Activated B cell treated with CpG ODN at 0.5 μM for 24 hours (primary cell): ENCODE measurements at regions of chr13 and their contacts with region 1.

Region 1: DNA sequence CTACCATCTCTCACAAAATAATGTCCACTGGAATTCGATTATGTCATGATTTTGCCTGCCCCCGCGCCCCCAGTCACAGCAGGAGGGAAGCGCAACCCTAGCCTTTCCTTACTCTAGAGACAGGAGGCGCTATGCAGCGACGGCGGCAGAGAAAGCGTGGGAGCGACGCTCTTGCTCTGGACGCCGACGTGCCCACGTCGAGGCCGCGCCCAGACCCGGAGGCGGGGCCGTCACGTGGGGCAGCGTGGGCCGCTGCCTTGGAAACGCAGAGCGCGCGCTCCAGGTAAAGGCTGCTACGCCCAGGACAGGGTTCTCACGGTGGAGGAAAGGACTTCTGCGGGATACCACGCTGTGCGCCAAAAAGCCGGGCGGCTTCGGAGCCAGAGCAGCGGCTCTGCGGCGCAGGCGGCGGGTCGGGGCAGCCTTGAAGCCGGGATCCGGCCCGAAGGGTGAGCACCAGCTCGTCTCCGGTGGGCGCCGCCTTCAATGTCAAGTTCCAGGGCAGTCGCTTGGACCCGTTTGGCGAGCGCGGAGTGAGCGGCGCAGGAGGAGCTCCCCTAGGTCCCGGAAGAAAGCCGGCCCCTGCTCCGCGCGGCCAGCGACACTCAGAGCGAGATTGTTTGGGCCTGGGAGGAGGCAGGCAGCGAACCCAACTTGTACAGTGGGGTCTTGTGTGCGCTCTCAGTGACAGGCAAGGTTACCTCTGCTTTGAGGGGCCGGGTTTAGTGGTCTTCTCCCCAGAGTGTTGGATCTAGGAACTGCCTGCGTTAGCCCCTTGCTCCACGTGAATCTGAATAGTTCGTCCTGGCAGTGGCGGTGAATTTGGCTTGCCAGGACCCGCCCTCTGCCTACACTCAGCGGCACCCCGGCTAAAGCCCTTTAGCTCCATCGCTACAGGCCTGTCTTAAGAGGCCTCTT is 121.7 kb downstream of the MRPL57 start:
- DNase-seq: peak; percentile 84
- ATAC-seq: peak; percentile 97
- H3K4me3 Mint-ChIP-seq: peak overlapping the region; percentile 89
- H3K27ac Mint-ChIP-seq: peak overlapping the region; percentile 77
- H3K4me1 Mint-ChIP-seq: peaks cover 18% of the 10 kb centered on the region
- H3K27me3 Mint-ChIP-seq: no peaks in the 10 kb centered on the region
- CTCF ChIP-seq: no peak

Region 2: DNA sequence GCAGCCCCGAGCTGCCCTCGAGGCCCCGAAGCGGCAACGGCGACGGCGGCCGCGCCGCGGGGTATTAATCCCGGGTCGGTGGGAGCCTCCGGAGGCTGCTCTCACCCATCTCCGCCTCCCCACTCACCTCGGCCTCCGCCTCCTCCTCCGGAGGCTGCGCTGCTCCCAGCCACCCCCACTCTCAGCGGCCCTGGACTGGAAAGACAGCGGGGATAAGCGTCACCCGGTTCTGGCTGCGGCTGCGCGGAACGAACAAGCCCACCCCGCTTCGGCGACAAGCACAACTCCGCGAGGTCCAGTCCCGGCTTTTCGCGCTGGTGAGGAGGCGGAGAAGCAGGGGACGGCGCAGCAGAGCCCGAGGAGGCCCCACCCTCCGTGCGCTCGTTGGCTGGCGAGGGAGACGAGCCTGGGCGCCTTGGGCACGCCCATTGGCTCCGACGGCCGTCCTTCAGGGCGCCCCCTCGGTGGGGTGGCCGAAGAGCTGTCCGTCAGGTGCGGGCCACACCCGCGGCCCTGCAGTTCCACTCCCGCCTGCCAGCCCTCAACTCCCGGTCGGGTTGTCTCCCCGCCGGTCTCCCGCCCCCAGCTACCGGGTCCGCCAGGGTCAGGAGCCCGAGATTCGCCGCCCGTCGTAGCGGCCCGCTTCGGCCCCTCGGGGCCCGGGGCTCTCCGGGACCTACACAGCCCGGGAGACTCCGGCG is 1434.7 kb before region 1 on chr13 and contains the start of gene ZMYM5:
- CTCF ChIA-PET with region 1: no interaction called
- POLR2A ChIA-PET with region 1: no interaction called
- intact Hi-C with region 1: loop called (anchors 10 kb)
- DNase-seq: peak; percentile 93
- ATAC-seq: peak; percentile 88
- H3K4me3 Mint-ChIP-seq: peak within 1 kb of the TSS; percentile 89
- H3K27ac Mint-ChIP-seq: peak within 1 kb of the TSS; percentile 96
- H3K4me1 Mint-ChIP-seq: peaks cover 30% of the 10 kb centered on the region
- H3K27me3 Mint-ChIP-seq: no peaks in the 10 kb centered on the region
- CTCF ChIP-seq: no peak
- total RNA-seq, gene ZMYM5: 14.1 and 17.1 TPM in 2 replicates

Region 3: DNA sequence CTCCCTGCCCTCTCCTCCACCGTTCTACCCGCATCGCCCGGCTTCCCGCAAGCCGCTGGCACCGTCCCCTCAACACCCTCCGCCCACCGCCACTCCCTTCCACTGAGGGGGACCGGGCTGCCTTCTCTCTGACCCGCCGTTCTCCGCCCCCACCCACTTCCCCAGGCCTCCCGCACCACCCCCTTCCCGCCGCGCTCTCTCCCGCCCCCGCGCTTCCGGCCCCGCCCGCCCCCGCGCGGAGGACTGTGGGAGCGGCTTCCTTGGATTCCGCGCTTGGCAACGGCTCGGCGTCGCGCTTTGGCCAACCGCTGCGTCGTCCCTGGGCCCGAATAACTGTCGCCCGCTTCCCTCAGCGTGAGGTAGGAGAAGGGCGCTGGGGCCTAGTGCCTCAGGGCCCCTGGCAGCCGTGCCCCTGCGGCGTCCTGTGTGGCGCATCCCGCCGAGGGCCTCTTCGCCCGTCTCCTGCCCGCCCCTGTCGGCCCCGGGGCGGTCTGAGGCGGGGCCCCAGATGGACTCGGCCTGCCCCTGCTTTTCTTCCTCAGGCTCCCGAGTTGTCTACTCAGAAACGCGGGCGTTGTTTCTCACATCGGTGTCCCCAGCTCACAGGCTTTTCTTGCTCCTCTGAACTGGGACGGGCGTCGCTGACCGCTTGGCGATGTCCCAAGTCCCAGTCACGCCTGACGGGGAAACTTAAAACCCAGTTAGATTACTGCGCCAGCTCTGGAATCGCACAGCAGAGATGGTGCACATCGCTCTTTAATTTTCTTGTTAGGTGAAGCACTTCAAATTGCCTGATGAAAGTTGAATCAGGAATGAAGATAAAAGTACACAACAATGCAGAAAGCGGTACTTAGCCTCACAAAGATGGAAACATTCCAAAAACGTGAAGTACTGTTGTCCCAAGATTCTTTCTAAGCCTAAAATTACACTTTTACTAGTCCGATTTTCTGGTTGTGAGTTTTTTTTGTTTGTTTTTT is 731.0 kb before region 1 on chr13 and contains the start of gene IFT88:
- CTCF ChIA-PET with region 1: no interaction called
- POLR2A ChIA-PET with region 1: no interaction called
- intact Hi-C with region 1: loop called (anchors 5 kb)
- DNase-seq: peak; percentile 92
- ATAC-seq: peak; percentile 90
- H3K4me3 Mint-ChIP-seq: peak within 1 kb of the TSS; percentile 92
- H3K27ac Mint-ChIP-seq: peak within 1 kb of the TSS; percentile 89
- H3K4me1 Mint-ChIP-seq: peaks cover 18% of the 10 kb centered on the region
- H3K27me3 Mint-ChIP-seq: no peaks in the 10 kb centered on the region
- CTCF ChIP-seq: no peak
- total RNA-seq, gene IFT88: 16.4 and 17.3 TPM in 2 replicates

Region 4: DNA sequence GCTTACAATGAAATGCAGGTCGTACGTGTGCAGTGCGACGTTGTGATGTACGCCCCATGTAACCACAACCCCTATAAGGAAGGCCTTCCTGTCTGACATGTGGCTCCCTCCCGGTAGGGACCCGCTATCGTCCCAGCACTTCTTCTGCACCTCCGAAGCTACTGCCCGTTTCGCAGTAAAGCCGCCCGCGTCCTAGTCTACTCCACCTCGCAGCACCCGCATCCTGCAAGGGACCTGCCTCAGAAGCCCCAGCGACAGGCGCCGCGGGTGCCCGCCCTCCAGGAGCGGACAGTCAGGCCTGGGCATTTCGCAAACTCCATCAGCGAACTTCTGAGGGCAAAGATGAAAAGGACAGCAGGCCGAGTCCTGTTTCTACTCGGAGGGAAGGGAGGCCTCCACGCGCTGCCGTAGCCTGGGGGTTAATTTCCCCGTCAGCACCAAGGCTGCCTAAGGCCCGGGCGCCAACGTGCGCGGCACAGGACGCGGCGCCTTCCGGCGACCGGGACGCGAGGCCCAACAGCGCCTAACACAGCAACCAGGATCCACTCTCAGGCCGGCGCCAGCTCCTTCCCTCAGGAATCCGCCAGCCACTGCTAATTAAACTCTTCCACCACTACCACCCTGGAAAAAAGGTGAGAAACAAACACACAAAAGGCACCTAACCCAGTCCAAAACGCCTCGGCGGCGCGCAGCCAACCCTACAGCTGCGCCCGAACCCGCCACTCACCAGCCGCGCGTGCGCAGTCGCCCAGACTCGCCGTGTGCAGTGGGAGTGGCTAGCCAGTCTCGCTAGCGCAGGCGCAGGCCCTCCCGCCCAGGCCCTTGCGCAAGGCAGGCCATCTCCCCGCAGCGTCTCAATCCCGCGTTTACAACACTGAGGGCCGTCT is 524.7 kb before region 1 on chr13 and contains the start of gene EEF1AKMT1:
- CTCF ChIA-PET with region 1: no interaction called
- POLR2A ChIA-PET with region 1: no interaction called
- intact Hi-C with region 1: loop called (anchors 5 kb)
- DNase-seq: peak; percentile 94
- ATAC-seq: peak; percentile 95
- H3K4me3 Mint-ChIP-seq: peak within 1 kb of the TSS; percentile 98
- H3K27ac Mint-ChIP-seq: peak within 1 kb of the TSS; percentile 99
- H3K4me1 Mint-ChIP-seq: peaks cover 21% of the 10 kb centered on the region
- H3K27me3 Mint-ChIP-seq: no peaks in the 10 kb centered on the region
- CTCF ChIP-seq: no peak
- total RNA-seq, gene EEF1AKMT1: 3.9 and 7.4 TPM in 2 replicates

Region 5: DNA sequence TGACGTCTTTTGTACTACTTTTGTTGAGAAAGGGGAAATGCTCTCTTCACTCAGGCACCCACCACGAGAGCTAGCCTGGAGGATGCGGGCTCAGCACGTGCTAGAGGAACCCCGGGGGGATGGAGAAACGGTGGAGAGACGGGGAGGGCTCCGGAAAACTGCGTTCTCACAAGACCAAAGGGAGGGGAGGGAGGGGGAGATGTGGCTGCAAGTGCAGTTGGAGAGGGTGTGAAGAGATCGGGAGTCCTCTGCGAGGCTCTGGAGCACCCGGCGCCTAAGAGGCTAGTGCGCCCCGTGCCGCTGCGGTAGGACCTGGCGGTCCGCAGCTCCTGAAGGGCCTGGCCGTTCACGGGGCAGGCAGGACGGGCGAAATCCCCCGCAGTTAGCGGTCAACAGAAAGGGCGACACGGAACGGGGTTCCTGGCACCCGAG is 352.2 kb before region 1 on chr13:
- CTCF ChIA-PET with region 1: no interaction called
- POLR2A ChIA-PET with region 1: no interaction called
- intact Hi-C with region 1: loop called (anchors 1 kb)
- DNase-seq: no peak
- ATAC-seq: no peak
- H3K4me3 Mint-ChIP-seq: peak overlapping the region; percentile 28
- H3K27ac Mint-ChIP-seq: no peak overlapping the region
- H3K4me1 Mint-ChIP-seq: peaks cover 6% of the 10 kb centered on the region
- H3K27me3 Mint-ChIP-seq: peaks cover 37% of the 10 kb centered on the region
- CTCF ChIP-seq: no peak

Region 6: DNA sequence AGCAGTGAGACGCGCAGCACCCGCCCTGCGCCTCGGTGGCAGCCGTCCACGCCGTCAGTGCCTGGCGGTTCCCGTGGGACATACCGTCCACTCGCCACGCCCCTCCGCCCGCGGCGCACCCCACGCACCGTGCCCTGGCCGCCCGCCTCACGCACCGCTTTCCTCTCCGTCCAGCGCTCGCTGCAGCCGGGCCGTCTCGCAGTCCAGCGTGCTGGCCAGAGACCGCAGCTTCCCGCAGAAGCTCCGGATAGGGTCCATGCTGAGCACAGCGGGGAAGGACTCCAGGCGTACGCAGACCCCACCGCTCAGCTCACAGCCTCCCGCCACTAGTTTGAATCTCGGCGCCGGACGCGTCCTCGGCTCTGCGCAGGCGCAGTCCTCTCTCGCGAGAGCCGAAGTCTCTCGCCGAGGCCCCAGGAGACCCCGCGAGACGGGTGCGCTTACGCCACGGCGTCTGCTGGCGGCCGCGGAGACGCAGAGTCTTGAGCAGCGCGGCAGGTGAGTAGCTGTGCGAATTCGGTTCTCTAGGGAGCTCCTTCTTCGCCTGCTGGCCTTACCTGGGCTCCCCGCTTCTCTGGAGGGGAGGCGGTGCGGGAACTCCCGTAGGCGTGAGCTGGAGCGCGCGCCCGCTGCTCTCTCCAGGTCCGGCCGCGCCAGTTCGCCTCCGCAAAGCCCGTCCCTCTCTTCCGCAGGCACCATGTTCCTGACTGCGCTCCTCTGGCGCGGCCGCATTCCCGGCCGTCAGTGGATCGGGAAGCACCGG is 121.8 kb before region 1 on chr13 and contains the starts of genes MRPL57 and SKA3:
- CTCF ChIA-PET with region 1: interaction called, 4 read pairs
- POLR2A ChIA-PET with region 1: interaction called, 12 read pairs
- intact Hi-C with region 1: loop called (anchors 1 kb)
- DNase-seq: peak; percentile 97
- ATAC-seq: peak; percentile 94
- H3K4me3 Mint-ChIP-seq: peak within 1 kb of the TSS; percentile 96
- H3K27ac Mint-ChIP-seq: peak within 1 kb of the TSS; percentile 91
- H3K4me1 Mint-ChIP-seq: peaks cover 22% of the 10 kb centered on the region
- H3K27me3 Mint-ChIP-seq: no peaks in the 10 kb centered on the region
- CTCF ChIP-seq: no peak
- total RNA-seq, gene MRPL57: 11.3 and 12.2 TPM in 2 replicates
- total RNA-seq, gene SKA3: 0.83 and 1.7 TPM in 2 replicates

Region 7: GRCh38 chr13:21476893-21477472 is 178.8 kb after region 1 on chr13:
- CTCF ChIA-PET with region 1: interaction called, 42 read pairs
- POLR2A ChIA-PET with region 1: interaction called, 4 read pairs
- intact Hi-C with region 1: loop called (anchors 1 kb)
- DNase-seq: peak; percentile 62
- ATAC-seq: peak; percentile 92
- H3K4me3 Mint-ChIP-seq: peak overlapping the region; percentile 87
- H3K27ac Mint-ChIP-seq: no peak overlapping the region
- H3K4me1 Mint-ChIP-seq: peaks cover 13% of the 10 kb centered on the region
- H3K27me3 Mint-ChIP-seq: no peaks in the 10 kb centered on the region
- CTCF ChIP-seq: peak; percentile 36